Pancreas (tissue), 10 donors: ENCODE measurements at regions of chr11 and their contacts with region 1.

Region 1: DNA sequence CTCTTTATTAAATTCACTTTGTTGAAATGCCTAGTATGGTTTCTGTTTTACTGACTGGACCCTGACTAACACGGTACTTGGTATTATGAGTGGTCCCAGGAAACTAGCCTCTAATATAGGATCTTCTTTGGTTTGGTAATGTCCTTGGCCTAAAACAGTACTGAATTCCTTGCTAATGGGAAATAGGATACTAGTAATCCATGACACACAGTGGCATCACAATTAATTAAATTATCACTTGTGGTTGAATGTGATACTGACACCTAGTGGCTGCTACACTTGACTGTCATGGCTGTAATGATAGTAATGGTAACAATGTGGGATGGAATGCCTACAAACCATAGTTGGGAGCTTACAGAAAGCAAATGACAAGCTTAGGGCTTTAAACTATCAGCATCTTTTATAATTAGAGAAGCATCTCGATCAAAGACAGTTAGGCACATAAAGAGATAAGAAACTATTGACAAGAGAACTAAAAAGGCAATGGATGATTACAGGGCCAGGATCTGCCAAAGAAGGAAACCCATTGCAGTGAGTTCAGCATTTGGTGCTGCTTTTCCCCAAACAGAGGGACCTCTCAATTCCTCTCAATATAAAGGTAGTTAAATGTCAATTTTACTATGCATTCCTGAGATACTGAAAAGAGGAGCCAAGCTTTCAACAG is 8.6 kb downstream of the DNHD1 start:
- DNase-seq: peak in 1 of 6 donors; percentile 15
- ATAC-seq: peak in 3 of 4 donors; percentile 80 to 83 (median 82)
- H3K4me3 ChIP-seq: no peak overlapping the region
- H3K27ac ChIP-seq: no peak overlapping the region
- H3K4me1 ChIP-seq: no peaks in the 10 kb centered on the region
- H3K27me3 ChIP-seq: no peaks in the 10 kb centered on the region
- CTCF ChIP-seq: peak; percentile 46 to 73 (median 59)

Region 2: DNA sequence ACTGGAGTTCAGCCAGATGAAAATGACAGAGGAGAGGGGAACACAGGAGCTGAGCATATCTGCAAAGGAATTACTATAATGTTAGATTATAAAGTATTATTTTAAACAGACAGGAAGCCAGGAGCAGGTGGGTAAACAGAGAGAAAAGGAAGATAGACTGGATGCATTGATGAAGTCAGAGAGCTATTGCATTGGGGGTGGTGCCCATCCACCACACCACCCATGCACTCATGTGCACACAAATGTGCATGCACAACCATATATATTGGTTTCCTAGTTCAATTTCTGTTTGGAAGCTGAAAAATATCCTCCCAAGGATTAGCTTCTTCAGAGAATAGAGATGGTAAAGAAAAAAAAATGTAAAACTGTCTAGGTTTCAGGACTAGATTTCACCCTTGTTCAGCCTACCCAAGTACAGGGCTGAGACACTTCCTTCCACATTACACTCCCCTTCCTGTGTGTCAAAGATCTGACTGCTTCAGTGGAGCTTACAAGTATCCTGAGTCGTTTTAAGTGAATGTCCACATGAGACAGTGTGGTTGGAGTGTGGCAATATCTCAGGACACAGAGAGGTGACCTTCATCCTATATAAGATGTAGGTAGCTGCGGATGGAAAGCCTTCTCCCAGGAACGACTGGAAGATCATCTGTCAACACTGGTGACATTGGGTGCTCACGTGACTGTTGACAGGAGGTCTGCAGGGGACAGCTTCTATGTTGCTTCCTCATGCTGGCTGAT is 127.6 kb before region 1 on chr11:
- intact Hi-C with region 1: loop called in 2 of 3 experiments (anchors 5 to 10 kb)
- DNase-seq: no peak
- ATAC-seq: peak in 1 of 4 donors; percentile 41
- H3K4me3 ChIP-seq: no peak overlapping the region
- H3K27ac ChIP-seq: no peak overlapping the region
- H3K4me1 ChIP-seq: no peaks in the 10 kb centered on the region
- H3K27me3 ChIP-seq: no peaks in the 10 kb centered on the region
- CTCF ChIP-seq: no peak

Region 3: GRCh38 chr11:6389921-6390724 is 115.6 kb before region 1 on chr11 and contains the start of gene SMPD1:
- intact Hi-C with region 1: loop called in 1 of 3 experiments (anchors 10 kb)
- DNase-seq: peak; percentile 92 to 97 (median 94)
- ATAC-seq: peak; percentile 95 to 97 (median 96)
- H3K4me3 ChIP-seq: peak within 1 kb of the TSS; percentile 60 to 83 (median 82)
- H3K27ac ChIP-seq: peak within 1 kb of the TSS; percentile 82 to 94 (median 92)
- H3K4me1 ChIP-seq: peaks cover 0 to 29% (median 9%) of the 10 kb centered on the region in 3 donors
- H3K27me3 ChIP-seq: no peaks in the 10 kb centered on the region
- CTCF ChIP-seq: no peak
- total RNA-seq, gene SMPD1: 19.4 to 32.3 (median 28.4) TPM

Region 4: GRCh38 chr11:6443269-6444003 is 62.3 kb before region 1 on chr11:
- intact Hi-C with region 1: loop called in 1 of 3 experiments (anchors 5 kb)
- DNase-seq: peak; percentile 26 to 67 (median 50)
- ATAC-seq: peak; percentile 79 to 92 (median 88)
- H3K4me3 ChIP-seq: no peak overlapping the region
- H3K27ac ChIP-seq: no peak overlapping the region
- H3K4me1 ChIP-seq: no peaks in the 10 kb centered on the region
- H3K27me3 ChIP-seq: no peaks in the 10 kb centered on the region
- CTCF ChIP-seq: peak; percentile 64 to 84 (median 72)

Region 5: DNA sequence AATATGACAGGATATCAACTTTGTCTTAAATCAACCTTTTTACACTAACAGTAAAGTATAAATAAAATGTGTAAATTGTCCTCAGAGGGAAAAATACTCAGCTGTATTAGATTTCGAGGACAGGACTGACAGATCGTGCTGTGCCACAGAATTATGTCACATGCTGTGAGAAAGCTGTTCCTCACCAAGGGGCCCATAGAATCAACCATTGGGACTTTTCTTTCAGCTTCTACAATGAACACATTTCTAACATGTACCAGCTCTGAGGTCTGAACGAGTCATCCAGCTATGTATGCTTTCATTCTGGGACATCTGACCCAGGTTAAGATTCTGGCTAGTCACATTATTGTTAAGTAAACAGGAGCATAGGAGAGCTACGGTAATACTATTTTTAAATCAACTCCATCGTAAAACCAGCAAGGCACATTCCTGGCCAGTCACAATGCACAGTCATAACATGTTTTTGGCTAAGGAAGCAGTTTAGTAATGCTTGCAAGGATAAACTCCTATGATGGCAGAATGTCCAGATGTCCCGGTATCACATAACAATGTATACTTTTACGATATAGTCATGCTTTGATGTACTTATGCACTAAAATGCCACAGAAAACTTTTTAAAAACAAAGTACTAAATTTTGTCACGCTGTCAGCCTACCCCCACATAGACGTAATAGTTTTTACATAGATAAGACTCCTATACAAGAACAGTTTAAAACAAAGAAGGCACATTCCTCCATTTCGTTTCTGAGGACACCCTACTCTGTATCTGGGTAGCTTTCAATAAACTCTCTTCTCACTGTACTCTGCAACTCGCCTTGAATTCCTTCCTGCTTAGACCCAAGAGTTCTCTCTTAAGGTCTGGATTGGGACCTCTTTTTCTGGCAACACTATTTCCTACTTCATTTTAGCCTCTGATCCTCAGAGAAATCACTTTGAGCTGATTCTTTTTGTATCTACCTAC is 487.0 kb after region 1 on chr11:
- intact Hi-C with region 1: no loop called
- DNase-seq: no peak
- ATAC-seq: no peak
- H3K4me3 ChIP-seq: no peak overlapping the region
- H3K27ac ChIP-seq: no peak overlapping the region
- H3K4me1 ChIP-seq: no peaks in the 10 kb centered on the region
- H3K27me3 ChIP-seq: no peaks in the 10 kb centered on the region
- CTCF ChIP-seq: no peak